ENCODE measurements at regions of chr18 and their contacts with region 1.

Region 1: GRCh38 chr18:59952283-59953007 is 52.6 kb downstream of the PMAIP1 start:
- DNase-seq: no peak
- ATAC-seq: no peak
- H3K4me3 Mint-ChIP-seq: no peak overlapping the region
- H3K27ac Mint-ChIP-seq: peak overlapping the region; percentile 50
- H3K4me1 Mint-ChIP-seq: peaks cover 26% of the 10 kb centered on the region
- H3K27me3 Mint-ChIP-seq: no peaks in the 10 kb centered on the region
- CTCF ChIP-seq: no peak

Region 2: GRCh38 chr18:59540780-59541179 is 411.7 kb before region 1 on chr18:
- CTCF ChIA-PET with region 1: no interaction called
- POLR2A ChIA-PET with region 1: no interaction called
- intact Hi-C with region 1: no loop called
- DNase-seq: no peak
- ATAC-seq: no peak
- H3K4me3 Mint-ChIP-seq: no peak overlapping the region
- H3K27ac Mint-ChIP-seq: no peak overlapping the region
- H3K4me1 Mint-ChIP-seq: no peaks in the 10 kb centered on the region
- H3K27me3 Mint-ChIP-seq: peaks cover 16% of the 10 kb centered on the region
- CTCF ChIP-seq: no peak

Region 3: DNA sequence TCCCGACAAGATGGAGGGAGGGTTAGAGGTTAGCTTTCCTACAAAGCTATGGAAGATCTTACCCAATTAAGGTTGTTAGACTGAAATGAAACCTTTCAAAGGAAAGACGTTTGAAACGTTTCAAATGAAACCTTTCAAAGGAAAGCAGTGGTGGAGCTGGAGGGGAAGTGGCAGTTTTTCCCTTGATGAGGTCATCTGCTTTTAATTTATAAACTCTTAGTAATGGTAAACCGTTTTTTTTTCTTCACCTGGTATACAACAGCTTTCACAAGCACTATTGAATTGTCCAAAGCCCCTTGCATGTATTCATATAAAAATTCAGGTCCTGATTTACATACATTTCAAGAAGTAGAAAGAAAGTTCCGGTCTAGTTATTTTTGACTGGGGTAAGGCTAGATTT is 45.3 kb before region 1 on chr18:
- CTCF ChIA-PET with region 1: no interaction called
- POLR2A ChIA-PET with region 1: interaction called, 21 read pairs
- intact Hi-C with region 1: loop called (anchors 1 kb)
- DNase-seq: no peak
- ATAC-seq: peak; percentile 19
- H3K4me3 Mint-ChIP-seq: peak overlapping the region; percentile 68
- H3K27ac Mint-ChIP-seq: peak overlapping the region; percentile 76
- H3K4me1 Mint-ChIP-seq: peaks cover 70% of the 10 kb centered on the region
- H3K27me3 Mint-ChIP-seq: no peaks in the 10 kb centered on the region
- CTCF ChIP-seq: no peak

Region 4: DNA sequence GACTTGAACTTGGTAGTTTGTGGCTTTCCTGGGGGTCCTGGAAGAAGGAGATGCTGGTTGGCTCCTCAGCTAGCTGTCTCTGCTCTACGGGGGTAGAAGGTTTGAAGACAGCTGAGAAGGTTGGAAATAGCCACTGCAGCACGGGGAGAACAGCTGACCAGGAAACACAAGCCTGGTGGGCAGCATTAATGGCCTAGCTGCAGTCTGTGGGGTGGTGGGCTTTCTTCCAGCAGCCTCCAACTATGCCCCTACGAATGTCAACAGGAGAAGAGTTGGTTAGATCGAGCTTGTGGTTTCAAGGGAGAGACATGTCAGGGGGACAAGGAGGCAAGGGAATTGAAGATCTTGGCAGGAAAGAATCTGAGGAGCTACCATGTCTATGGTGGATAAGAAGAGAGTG is 13.8 kb before region 1 on chr18:
- CTCF ChIA-PET with region 1: interaction called, 4 read pairs
- POLR2A ChIA-PET with region 1: interaction called, 10 read pairs
- intact Hi-C with region 1: no loop called
- DNase-seq: no peak
- ATAC-seq: no peak
- H3K4me3 Mint-ChIP-seq: no peak overlapping the region
- H3K27ac Mint-ChIP-seq: no peak overlapping the region
- H3K4me1 Mint-ChIP-seq: peaks cover 2% of the 10 kb centered on the region
- H3K27me3 Mint-ChIP-seq: no peaks in the 10 kb centered on the region
- CTCF ChIP-seq: no peak

Measured in activated B cell treated with CpG ODN at 0.5 μM for 24 hours (primary cell).